ENCODE measurements at regions of chr13 and their contacts with region 1.

Region 1: GRCh38 chr13:38223089-38223488 is 126.6 kb upstream of the UFM1 start:
- DNase-seq: peak in 1 of 2 experiments; percentile 29
- H3K4me3 ChIP-seq: no peak overlapping the region
- H3K4me3 Mint-ChIP-seq: no peak overlapping the region
- H3K27ac Mint-ChIP-seq: no peak overlapping the region
- H3K4me1 ChIP-seq: no peaks in the 10 kb centered on the region
- H3K4me1 Mint-ChIP-seq: no peaks in the 10 kb centered on the region
- H3K27me3 ChIP-seq: no peaks in the 10 kb centered on the region
- H3K27me3 Mint-ChIP-seq: no peaks in the 10 kb centered on the region
- CTCF ChIP-seq: peak in 1 of 2 experiments; percentile 51

Region 2: GRCh38 chr13:37194428-37194861 is 1028.6 kb before region 1 on chr13:
- CTCF ChIA-PET with region 1: no interaction called
- POLR2A ChIA-PET with region 1: no interaction called
- intact Hi-C with region 1: no loop called
- DNase-seq: no peak
- H3K4me3 ChIP-seq: no peak overlapping the region
- H3K4me3 Mint-ChIP-seq: no peak overlapping the region
- H3K27ac Mint-ChIP-seq: no peak overlapping the region
- H3K4me1 ChIP-seq: no peaks in the 10 kb centered on the region
- H3K4me1 Mint-ChIP-seq: no peaks in the 10 kb centered on the region
- H3K27me3 ChIP-seq: no peaks in the 10 kb centered on the region
- H3K27me3 Mint-ChIP-seq: no peaks in the 10 kb centered on the region
- CTCF ChIP-seq: no peak

Region 3: GRCh38 chr13:37769078-37769477 is 454.0 kb before region 1 on chr13:
- CTCF ChIA-PET with region 1: no interaction called
- POLR2A ChIA-PET with region 1: no interaction called
- intact Hi-C with region 1: loop called (anchors 5 kb)
- DNase-seq: no peak
- H3K4me3 ChIP-seq: no peak overlapping the region
- H3K4me3 Mint-ChIP-seq: no peak overlapping the region
- H3K27ac Mint-ChIP-seq: no peak overlapping the region
- H3K4me1 ChIP-seq: no peaks in the 10 kb centered on the region
- H3K4me1 Mint-ChIP-seq: no peaks in the 10 kb centered on the region
- H3K27me3 ChIP-seq: no peaks in the 10 kb centered on the region
- H3K27me3 Mint-ChIP-seq: peaks cover 3% of the 10 kb centered on the region
- CTCF ChIP-seq: peak in 1 of 2 experiments; percentile 13

Region 4: GRCh38 chr13:37869756-37870488 is 353.2 kb before region 1 on chr13 and contains the start of gene TRPC4:
- CTCF ChIA-PET with region 1: no interaction called
- POLR2A ChIA-PET with region 1: no interaction called
- intact Hi-C with region 1: loop called (anchors 2 kb)
- DNase-seq: peak; percentile 42 to 46
- H3K4me3 ChIP-seq: no peak within 1 kb of the TSS
- H3K4me3 Mint-ChIP-seq: no peak within 1 kb of the TSS
- H3K27ac Mint-ChIP-seq: no peak within 1 kb of the TSS
- H3K4me1 ChIP-seq: no peaks in the 10 kb centered on the region
- H3K4me1 Mint-ChIP-seq: no peaks in the 10 kb centered on the region
- H3K27me3 ChIP-seq: no peaks in the 10 kb centered on the region; the same call in 1 of the 2 replicates
- H3K27me3 Mint-ChIP-seq: peaks cover 18% of the 10 kb centered on the region
- CTCF ChIP-seq: peak in 1 of 2 experiments; percentile 53
- total RNA-seq, gene TRPC4: not detected in 2 replicates

Region 5: DNA sequence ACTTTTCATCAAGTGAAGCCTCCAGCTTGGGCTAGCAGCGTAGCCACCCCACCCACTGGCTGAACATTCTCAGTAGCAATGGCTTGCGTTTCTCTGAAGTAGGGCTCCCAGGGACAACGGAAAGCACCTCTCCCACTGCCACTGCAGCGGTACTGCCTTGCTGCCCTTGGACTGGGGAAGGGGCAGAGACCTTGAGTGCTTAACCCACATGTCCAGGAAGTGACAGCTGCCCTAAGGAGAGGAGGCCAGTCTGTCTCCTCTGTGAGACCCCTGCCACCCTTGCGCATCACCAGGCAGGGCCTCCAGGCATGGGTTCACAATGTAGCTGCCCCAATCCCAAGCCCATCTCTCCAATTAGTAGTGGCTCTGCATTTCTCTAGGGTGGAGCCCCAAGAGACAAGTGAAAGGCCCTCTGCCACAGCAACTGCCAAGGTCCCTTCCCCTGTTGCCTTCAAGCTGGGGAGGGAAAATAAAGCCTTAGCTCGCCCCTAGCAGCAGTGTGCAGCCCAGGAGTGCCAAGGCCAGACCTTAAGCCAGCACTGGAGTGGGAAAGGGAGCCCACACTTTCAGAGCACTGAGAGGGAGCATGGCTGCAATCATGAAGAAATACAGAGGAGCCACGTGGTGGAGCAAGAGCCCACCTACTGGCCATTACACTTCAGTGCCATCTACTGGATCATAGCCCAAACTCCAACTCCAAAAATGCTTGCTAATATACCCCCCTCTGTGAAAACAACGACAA is 177.6 kb before region 1 on chr13:
- CTCF ChIA-PET with region 1: no interaction called
- POLR2A ChIA-PET with region 1: no interaction called
- intact Hi-C with region 1: loop called (anchors 2 kb)
- DNase-seq: peak in 1 of 2 experiments; percentile 47
- H3K4me3 ChIP-seq: no peak overlapping the region
- H3K4me3 Mint-ChIP-seq: no peak overlapping the region
- H3K27ac Mint-ChIP-seq: no peak overlapping the region
- H3K4me1 ChIP-seq: no peaks in the 10 kb centered on the region
- H3K4me1 Mint-ChIP-seq: no peaks in the 10 kb centered on the region
- H3K27me3 ChIP-seq: no peaks in the 10 kb centered on the region
- H3K27me3 Mint-ChIP-seq: no peaks in the 10 kb centered on the region
- CTCF ChIP-seq: peak; percentile 56 to 85

Region 6: DNA sequence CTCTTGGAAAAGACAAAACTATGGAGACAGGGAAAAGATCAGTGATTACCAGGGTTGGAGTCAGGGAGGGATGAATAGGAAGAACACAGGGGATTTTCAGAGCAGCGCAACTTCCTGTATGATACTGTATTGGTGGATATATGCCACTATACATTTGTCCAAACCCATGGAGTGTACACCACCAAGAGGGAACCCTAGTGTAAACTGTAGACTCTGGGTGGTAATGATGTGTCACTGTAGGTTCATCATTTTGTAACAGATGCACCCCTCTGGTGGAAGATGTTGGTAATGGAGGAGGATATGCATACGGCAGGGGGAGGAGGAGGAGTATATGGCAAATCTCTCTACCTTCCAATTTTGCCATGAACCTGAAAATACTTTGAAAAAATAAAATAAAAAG is 194.6 kb after region 1 on chr13:
- CTCF ChIA-PET with region 1: no interaction called
- POLR2A ChIA-PET with region 1: no interaction called
- intact Hi-C with region 1: loop called (anchors 10 kb)
- DNase-seq: peak; percentile 55 to 68
- H3K4me3 ChIP-seq: no peak overlapping the region
- H3K4me3 Mint-ChIP-seq: no peak overlapping the region
- H3K27ac Mint-ChIP-seq: no peak overlapping the region
- H3K4me1 ChIP-seq: no peaks in the 10 kb centered on the region
- H3K4me1 Mint-ChIP-seq: no peaks in the 10 kb centered on the region
- H3K27me3 ChIP-seq: no peaks in the 10 kb centered on the region
- H3K27me3 Mint-ChIP-seq: no peaks in the 10 kb centered on the region
- CTCF ChIP-seq: peak; percentile 60 to 69

Measured in Caco-2 (cell line).